Mammary epithelial cell (primary cell): ENCODE measurements at regions of chr11 and their contacts with region 1.

Region 1: GRCh38 chr11:68297812-68298658 is 14.4 kb upstream of the LRP5 start:
- DNase-seq: peak; percentile 58
- H3K4me3 ChIP-seq: no peak overlapping the region
- H3K27ac ChIP-seq: no peak overlapping the region
- H3K4me1 ChIP-seq: peaks cover 9% of the 10 kb centered on the region
- H3K27me3 ChIP-seq: no peaks in the 10 kb centered on the region
- CTCF ChIP-seq: peak; percentile 80 to 98

Region 2: GRCh38 chr11:68213555-68214174 is 84.4 kb before region 1 on chr11:
- CTCF ChIA-PET with region 1: interaction called, 6 read pairs
- dilution Hi-C with region 1: loop called (anchors 5 kb)
- in situ Hi-C with region 1: no loop called
- intact Hi-C with region 1: loop called (anchors 1 kb)
- DNase-seq: peak; percentile 91
- H3K4me3 ChIP-seq: peak overlapping the region; percentile 46 to 66 (median 66)
- H3K27ac ChIP-seq: peak overlapping the region; percentile 52
- H3K4me1 ChIP-seq: peaks cover 39% of the 10 kb centered on the region
- H3K27me3 ChIP-seq: peaks cover 1% of the 10 kb centered on the region
- CTCF ChIP-seq: no peak

Region 3: GRCh38 chr11:68257475-68258362 is 40.3 kb before region 1 on chr11:
- CTCF ChIA-PET with region 1: interaction called, 3 read pairs
- dilution Hi-C with region 1: no loop called
- in situ Hi-C with region 1: loop called (anchors 5 kb)
- intact Hi-C with region 1: loop called (anchors 1 kb)
- DNase-seq: peak; percentile 75
- H3K4me3 ChIP-seq: no peak overlapping the region
- H3K27ac ChIP-seq: no peak overlapping the region
- H3K4me1 ChIP-seq: peaks cover 4% of the 10 kb centered on the region
- H3K27me3 ChIP-seq: no peaks in the 10 kb centered on the region
- CTCF ChIP-seq: peak; percentile 65 to 83

Region 4: DNA sequence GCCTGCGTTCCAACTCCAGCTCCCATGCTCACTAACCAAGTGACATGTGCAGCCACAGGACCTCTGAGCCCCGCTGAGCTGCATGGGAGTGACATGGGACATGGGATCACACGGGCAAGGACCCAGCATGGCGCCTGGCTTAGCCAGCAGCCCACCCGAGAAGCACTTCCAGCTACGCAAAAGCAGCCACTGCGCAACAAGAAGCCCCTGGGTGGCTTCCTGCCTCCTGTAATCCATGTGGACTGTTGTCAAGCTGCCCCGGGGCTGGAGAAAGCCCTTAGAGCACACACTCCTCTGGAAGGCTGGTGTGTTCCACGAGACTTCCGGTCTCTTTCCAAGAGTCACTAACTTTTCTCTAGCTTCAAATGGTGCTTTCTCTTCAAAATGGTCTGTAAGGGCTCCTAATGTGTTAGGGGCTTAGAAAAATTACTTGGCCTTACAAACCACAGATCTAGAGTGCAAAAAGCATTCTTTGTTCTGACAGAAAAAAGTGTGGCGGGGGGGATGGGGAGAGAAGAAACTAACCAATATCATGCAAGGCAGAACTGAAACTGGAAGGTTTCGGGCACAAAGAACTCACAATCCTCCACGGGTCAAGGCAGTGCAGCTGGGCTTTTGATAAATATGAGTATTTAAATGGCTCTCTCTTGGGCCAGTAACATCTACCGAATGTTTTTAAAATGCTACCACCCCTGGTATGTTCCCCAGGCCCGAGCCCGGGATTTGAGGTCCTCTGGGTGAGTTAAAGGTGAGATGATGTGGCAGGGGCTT is 31.7 kb before region 1 on chr11:
- CTCF ChIA-PET with region 1: no interaction called
- dilution Hi-C with region 1: loop called (anchors 5 kb)
- in situ Hi-C with region 1: no loop called
- intact Hi-C with region 1: loop called (anchors 1 kb)
- DNase-seq: no peak
- H3K4me3 ChIP-seq: no peak overlapping the region
- H3K27ac ChIP-seq: no peak overlapping the region
- H3K4me1 ChIP-seq: peaks cover 17% of the 10 kb centered on the region
- H3K27me3 ChIP-seq: no peaks in the 10 kb centered on the region
- CTCF ChIP-seq: no peak

Region 5: GRCh38 chr11:68271781-68272608 is 26.0 kb before region 1 on chr11 and contains the start of gene C11orf24:
- CTCF ChIA-PET with region 1: interaction called, 3 read pairs
- dilution Hi-C with region 1: loop called (anchors 5 kb)
- in situ Hi-C with region 1: no loop called
- intact Hi-C with region 1: loop called (anchors 1 kb)
- DNase-seq: peak; percentile 94
- H3K4me3 ChIP-seq: peak within 1 kb of the TSS; percentile 71 to 94 (median 73)
- H3K27ac ChIP-seq: peak within 1 kb of the TSS; percentile 84
- H3K4me1 ChIP-seq: peaks cover 35% of the 10 kb centered on the region
- H3K27me3 ChIP-seq: no peaks in the 10 kb centered on the region
- CTCF ChIP-seq: peak in 1 of 2 donors; percentile 1
- total RNA-seq, gene C11orf24: 30.2 to 64.3 TPM

Region 6: GRCh38 chr11:68447015-68447801 is 149.2 kb after region 1 on chr11:
- CTCF ChIA-PET with region 1: no interaction called
- dilution Hi-C with region 1: no loop called
- in situ Hi-C with region 1: no loop called
- intact Hi-C with region 1: loop called (anchors 2 kb)
- DNase-seq: peak; percentile 45
- H3K4me3 ChIP-seq: no peak overlapping the region
- H3K27ac ChIP-seq: no peak overlapping the region
- H3K4me1 ChIP-seq: peaks cover 4% of the 10 kb centered on the region
- H3K27me3 ChIP-seq: no peaks in the 10 kb centered on the region
- CTCF ChIP-seq: peak; percentile 89 to 92